HAP-1 (cell line): ENCODE measurements at regions of chr6 and their contacts with region 1.

Region 1: DNA sequence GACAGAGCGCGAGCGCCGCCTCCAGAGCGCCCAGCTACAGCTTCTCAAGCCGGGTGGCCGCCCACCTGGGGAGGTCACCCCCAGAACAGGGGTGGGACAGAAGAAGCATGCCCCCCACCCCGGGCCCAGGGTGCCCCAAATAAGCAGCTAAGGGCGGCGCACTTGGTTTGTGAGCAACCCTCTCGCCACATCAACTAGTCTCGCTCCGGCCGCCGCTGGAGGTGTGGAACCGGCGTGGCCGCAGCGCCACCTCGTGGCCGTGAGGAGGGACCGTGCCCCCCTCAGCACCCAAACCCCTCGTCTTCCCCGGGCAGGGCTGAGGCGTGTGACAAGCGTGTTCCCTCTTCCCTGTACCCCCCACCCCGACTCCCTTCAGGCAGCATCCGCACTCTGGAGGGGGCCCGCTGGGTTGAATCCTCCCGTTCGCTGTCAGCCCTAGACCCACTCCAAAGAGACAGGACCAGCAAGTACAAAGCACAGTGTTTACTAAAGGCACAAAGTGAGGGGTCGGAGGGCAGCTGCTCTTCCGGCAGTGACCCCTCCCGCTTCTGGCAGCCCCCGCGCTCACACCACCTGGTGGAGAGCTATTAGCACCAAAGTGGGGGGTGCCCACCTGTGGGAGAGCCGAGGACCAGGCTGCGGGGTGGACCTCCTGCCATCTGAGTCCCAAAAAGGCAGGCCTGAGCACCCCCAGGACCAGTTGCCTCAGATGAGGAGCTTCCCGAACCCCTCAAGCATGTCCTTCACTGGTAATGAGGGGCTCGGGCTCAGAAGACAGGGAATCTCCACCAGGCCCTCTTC is 45.4 kb downstream of the MDFI start:
- DNase-seq: peak; percentile 58 to 85
- H3K4me3 ChIP-seq: no peak overlapping the region
- H3K4me1 ChIP-seq: no peaks in the 10 kb centered on the region
- H3K27me3 ChIP-seq: no peaks in the 10 kb centered on the region

Region 2: DNA sequence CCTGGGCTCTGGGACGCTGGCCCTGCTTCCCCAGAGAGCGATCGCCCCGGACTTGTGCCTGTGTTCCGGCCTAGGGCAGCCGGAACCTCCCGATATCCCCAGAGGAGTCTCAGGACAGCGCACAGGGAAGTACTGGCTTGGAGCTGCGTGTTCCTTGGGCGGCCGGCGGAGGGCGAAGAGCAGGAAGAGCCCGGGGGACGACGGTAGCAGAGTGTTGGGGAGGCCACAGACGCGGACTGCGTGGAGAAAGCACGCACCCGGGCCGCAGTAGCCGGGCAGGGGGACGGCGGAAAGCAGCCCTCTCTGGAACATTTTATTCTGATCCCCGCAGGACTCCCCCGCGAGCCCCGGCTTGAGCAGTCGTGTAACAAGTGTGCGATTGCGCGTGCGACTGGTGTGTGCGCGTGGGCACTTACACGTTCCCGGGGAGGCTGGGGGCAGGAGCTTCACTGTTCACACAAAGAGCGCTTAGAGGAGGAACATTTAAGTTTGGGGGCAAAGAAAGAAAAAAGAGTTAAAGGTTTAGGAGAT is 312.2 kb before region 1 on chr6:
- in situ Hi-C with region 1: loop called (anchors 5 kb)
- DNase-seq: peak in 1 of 2 experiments; percentile 65
- H3K4me3 ChIP-seq: no peak overlapping the region
- H3K4me1 ChIP-seq: peaks cover 11% of the 10 kb centered on the region
- H3K27me3 ChIP-seq: peaks cover 51% of the 10 kb centered on the region

Region 3: GRCh38 chr6:41488433-41489119 is 195.1 kb before region 1 on chr6:
- in situ Hi-C with region 1: no loop called
- DNase-seq: no peak
- H3K4me3 ChIP-seq: no peak overlapping the region
- H3K4me1 ChIP-seq: no peaks in the 10 kb centered on the region; the same call in 1 of the 2 replicates
- H3K27me3 ChIP-seq: no peaks in the 10 kb centered on the region

Region 4: GRCh38 chr6:41505122-41506049 is 178.3 kb before region 1 on chr6:
- in situ Hi-C with region 1: no loop called
- DNase-seq: peak; percentile 15 to 57
- H3K4me3 ChIP-seq: 0 out of 2 replicates have a peak overlapping the region, but pooled peaks have one; percentile 1
- H3K4me1 ChIP-seq: peaks cover 26% of the 10 kb centered on the region
- H3K27me3 ChIP-seq: no peaks in the 10 kb centered on the region

Region 5: GRCh38 chr6:41599015-41599854 is 84.5 kb before region 1 on chr6:
- in situ Hi-C with region 1: loop called (anchors 5 kb)
- DNase-seq: no peak
- H3K4me3 ChIP-seq: no peak overlapping the region
- H3K4me1 ChIP-seq: peaks cover 6% of the 10 kb centered on the region; the same call in 1 of the 2 replicates
- H3K27me3 ChIP-seq: no peaks in the 10 kb centered on the region